Activated naive CD4-positive, alpha-beta T cell treated with anti-CD3 and anti-CD28 coated beads, Interleukin-2, amount 10 ng/mL, durations not matched to agents 7 days and 5 days (primary cell): ENCODE measurements at regions of chr3 and their contacts with region 1.

Region 1: DNA sequence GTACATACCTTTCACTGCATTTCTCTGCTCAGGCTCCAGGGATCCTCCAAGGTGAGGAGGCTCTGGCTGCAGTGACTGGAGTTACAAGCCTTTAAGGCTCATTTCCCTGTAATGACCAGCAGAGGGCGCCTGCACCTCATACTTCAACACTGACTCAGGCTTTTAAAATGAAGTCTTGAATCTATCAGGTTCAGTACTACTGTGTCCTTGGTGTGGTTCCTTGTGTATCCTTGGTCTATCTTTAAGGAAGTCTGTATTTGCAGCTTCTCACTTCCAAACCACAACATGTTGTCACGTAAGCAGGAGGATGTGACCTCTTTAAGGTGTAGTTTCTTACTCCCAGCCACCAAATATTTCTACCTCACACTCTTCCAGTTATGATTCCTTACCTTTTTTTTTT is 122.5 kb upstream of the ZBED2 start:
- DNase-seq: peak; percentile 76
- H3K4me3 Mint-ChIP-seq: no peak overlapping the region
- H3K27ac Mint-ChIP-seq: no peak overlapping the region
- H3K4me1 Mint-ChIP-seq: peaks cover 2% of the 10 kb centered on the region
- H3K27me3 Mint-ChIP-seq: no peaks in the 10 kb centered on the region

Region 2: DNA sequence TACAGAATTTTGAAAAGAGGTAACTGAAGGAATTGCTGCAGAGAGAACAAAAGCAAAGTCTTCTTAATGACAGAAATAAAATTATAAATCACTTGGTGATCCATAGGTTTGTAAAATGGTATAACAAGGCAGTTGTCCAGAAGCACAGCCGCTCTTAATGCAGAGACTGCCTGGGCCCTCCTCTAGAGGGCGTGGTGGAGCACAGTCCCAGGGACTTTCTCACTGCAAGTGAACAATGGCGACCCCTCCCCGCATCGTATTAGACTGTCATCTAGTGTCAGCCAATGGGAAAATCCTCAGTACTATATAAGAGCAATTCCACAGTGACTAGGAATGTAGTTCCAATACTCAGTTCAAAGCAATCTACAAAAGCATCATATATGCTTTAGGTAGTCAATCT is 96.1 kb before region 1 on chr3:
- CTCF ChIA-PET with region 1: no interaction called
- DNase-seq: peak; percentile 37
- H3K4me3 Mint-ChIP-seq: no peak overlapping the region
- H3K27ac Mint-ChIP-seq: no peak overlapping the region
- H3K4me1 Mint-ChIP-seq: peaks cover 26% of the 10 kb centered on the region
- H3K27me3 Mint-ChIP-seq: no peaks in the 10 kb centered on the region

Region 3: GRCh38 chr3:111668912-111669488 is 48.6 kb before region 1 on chr3:
- CTCF ChIA-PET with region 1: interaction called, 72 read pairs
- DNase-seq: no peak
- H3K4me3 Mint-ChIP-seq: no peak overlapping the region
- H3K27ac Mint-ChIP-seq: peak overlapping the region; percentile 83
- H3K4me1 Mint-ChIP-seq: peaks cover 85% of the 10 kb centered on the region
- H3K27me3 Mint-ChIP-seq: no peaks in the 10 kb centered on the region

Region 4: GRCh38 chr3:111859974-111860859 is 142.6 kb after region 1 on chr3:
- CTCF ChIA-PET with region 1: interaction called, 26 read pairs
- DNase-seq: peak; percentile 69
- H3K4me3 Mint-ChIP-seq: peak overlapping the region; percentile 92
- H3K27ac Mint-ChIP-seq: peak overlapping the region; percentile 77
- H3K4me1 Mint-ChIP-seq: peaks cover 25% of the 10 kb centered on the region
- H3K27me3 Mint-ChIP-seq: peaks cover 68% of the 10 kb centered on the region

Region 5: DNA sequence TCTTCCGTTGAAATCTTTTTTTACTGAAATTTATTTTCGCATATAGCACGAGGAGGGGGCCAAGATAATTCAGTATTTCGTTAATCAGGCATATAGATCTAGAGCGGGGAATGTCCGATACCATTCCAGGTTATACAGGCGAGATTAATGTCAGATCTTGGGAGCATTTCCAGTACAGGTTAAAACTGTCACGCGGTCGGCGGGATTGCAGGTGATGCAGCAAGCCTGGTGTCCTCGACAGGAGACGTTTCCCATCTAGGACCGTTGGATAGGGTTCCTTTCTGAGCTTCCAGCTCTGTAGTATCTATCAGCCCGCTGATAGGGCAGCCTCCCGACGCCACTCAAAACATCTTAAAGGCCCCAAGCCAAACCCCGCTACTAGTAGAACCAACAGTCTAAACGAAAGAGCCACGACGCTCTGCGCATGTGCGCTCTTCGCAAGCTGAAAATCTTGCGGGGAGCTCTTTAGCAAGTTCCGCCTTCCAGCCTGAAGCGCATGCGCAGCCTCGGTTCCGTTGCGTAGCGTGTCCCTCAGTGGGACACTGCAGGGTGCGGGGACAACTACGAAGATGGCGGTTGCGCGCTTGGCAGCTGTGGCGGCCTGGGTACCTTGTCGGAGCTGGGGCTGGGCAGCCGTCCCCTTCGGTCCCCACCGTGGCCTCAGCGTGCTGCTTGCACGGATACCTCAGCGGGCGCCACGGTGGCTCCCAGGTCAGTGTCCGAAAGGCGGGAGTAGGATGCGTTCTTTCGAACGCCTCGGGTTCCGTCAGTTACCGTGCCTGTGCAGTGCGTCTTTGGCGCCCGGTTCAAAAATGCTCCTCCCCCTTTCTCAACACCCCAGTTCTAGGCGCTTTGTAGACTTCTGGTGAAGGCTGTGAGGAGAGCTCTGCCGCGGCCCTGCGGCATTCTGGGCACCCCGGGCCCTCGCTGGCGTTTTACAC is 261.2 kb after region 1 on chr3 and contains the start of gene ABHD10:
- CTCF ChIA-PET with region 1: interaction called, 15 read pairs
- DNase-seq: peak; percentile 98
- H3K4me3 Mint-ChIP-seq: peak within 1 kb of the TSS; percentile 87
- H3K27ac Mint-ChIP-seq: peak within 1 kb of the TSS; percentile 96
- H3K4me1 Mint-ChIP-seq: peaks cover 41% of the 10 kb centered on the region
- H3K27me3 Mint-ChIP-seq: peaks cover 12% of the 10 kb centered on the region

Region 6: GRCh38 chr3:112013058-112013783 is 295.6 kb after region 1 on chr3:
- CTCF ChIA-PET with region 1: interaction called, 42 read pairs
- DNase-seq: peak; percentile 67
- H3K4me3 Mint-ChIP-seq: no peak overlapping the region
- H3K27ac Mint-ChIP-seq: no peak overlapping the region
- H3K4me1 Mint-ChIP-seq: peaks cover 13% of the 10 kb centered on the region
- H3K27me3 Mint-ChIP-seq: no peaks in the 10 kb centered on the region